ENCODE measurements at regions of chr13 and their contacts with region 1.

Region 1: GRCh38 chr13:28597641-28598040 is 61.3 kb upstream of the POMP start:
- DNase-seq: no peak
- ATAC-seq: peak in 4 of 8 donors; percentile 29 to 65 (median 59)
- H3K4me3 ChIP-seq: no peak overlapping the region
- H3K27ac ChIP-seq: no peak overlapping the region
- H3K4me1 ChIP-seq: no peaks in the 10 kb centered on the region
- H3K27me3 ChIP-seq: no peaks in the 10 kb centered on the region
- CTCF ChIP-seq: no peak

Region 2: GRCh38 chr13:28554771-28555495 is 42.7 kb before region 1 on chr13:
- intact Hi-C with region 1: loop called in 1 of 10 experiments (anchors 5 kb)
- DNase-seq: no peak
- ATAC-seq: no peak
- H3K4me3 ChIP-seq: no peak overlapping the region
- H3K27ac ChIP-seq: no peak overlapping the region
- H3K4me1 ChIP-seq: peaks cover 0 to 21% (median 5%) of the 10 kb centered on the region in 9 donors
- H3K27me3 ChIP-seq: no peaks in the 10 kb centered on the region
- CTCF ChIP-seq: no peak

Region 3: GRCh38 chr13:30172593-30173302 is 1575.1 kb after region 1 on chr13:
- intact Hi-C with region 1: loop called in 1 of 10 experiments (anchors 5 kb)
- DNase-seq: no peak
- ATAC-seq: peak in 1 of 8 donors; percentile 47
- H3K4me3 ChIP-seq: no peak overlapping the region
- H3K27ac ChIP-seq: no peak overlapping the region
- H3K4me1 ChIP-seq: no peaks in the 10 kb centered on the region
- H3K27me3 ChIP-seq: no peaks in the 10 kb centered on the region
- CTCF ChIP-seq: no peak